ENCODE measurements at regions of chr12 and their contacts with region 1.

Region 1: DNA sequence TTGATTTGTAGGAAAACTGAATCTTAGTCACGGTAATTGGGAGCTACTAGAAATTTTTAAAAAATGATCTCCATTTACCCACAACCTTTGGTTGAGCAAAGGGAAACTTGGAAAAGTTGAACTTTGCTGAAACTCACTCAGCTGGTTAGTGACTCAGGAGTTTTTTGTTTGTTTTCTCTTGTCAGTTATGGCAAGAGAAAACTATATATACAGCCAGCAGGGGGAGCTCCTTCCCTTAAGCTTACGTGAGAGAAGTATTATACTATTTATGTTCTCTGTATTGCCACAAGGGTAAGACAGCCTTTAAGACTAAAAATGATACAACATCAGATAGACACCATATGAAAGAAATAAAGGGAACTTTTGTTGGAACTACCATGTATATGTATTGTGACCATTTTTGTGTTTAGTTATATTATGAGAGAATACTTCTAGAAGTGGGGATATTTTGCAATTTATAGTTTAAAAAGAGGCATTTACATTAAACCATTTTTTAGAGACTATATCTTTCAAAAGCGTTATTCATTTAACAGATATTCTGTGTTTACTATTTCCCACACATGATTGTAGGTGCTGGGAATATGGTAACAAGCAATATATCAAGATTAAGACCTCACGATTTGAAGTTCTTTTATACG is 28.1 kb upstream of the TBC1D30 start:
- DNase-seq: peak; percentile 67
- CTCF ChIP-seq: peak; percentile 78

Region 2: GRCh38 chr12:64583771-64584421 is 212.4 kb before region 1 on chr12:
- CTCF ChIA-PET with region 1: no interaction called
- POLR2A ChIA-PET with region 1: no interaction called
- DNase-seq: no peak
- CTCF ChIP-seq: no peak

Region 3: GRCh38 chr12:64780531-64781279 is 15.6 kb before region 1 on chr12:
- CTCF ChIA-PET with region 1: interaction called, 40 read pairs
- POLR2A ChIA-PET with region 1: no interaction called
- DNase-seq: peak; percentile 47
- CTCF ChIP-seq: no peak

Region 4: GRCh38 chr12:64785838-64786237 is 10.5 kb before region 1 on chr12:
- CTCF ChIA-PET with region 1: interaction called, 40 read pairs
- POLR2A ChIA-PET with region 1: no interaction called
- DNase-seq: no peak
- CTCF ChIP-seq: no peak

Region 5: GRCh38 chr12:64806593-64807460 is 10.5 kb after region 1 on chr12:
- CTCF ChIA-PET with region 1: interaction called, 33 read pairs
- POLR2A ChIA-PET with region 1: no interaction called
- DNase-seq: no peak
- CTCF ChIP-seq: no peak

Region 6: GRCh38 chr12:64814432-64814831 is 18.1 kb after region 1 on chr12:
- CTCF ChIA-PET with region 1: interaction called, 33 read pairs
- POLR2A ChIA-PET with region 1: no interaction called
- DNase-seq: no peak
- CTCF ChIP-seq: no peak

Region 7: GRCh38 chr12:65106948-65107347 is 310.6 kb after region 1 on chr12:
- CTCF ChIA-PET with region 1: interaction called, 57 read pairs
- POLR2A ChIA-PET with region 1: no interaction called
- DNase-seq: peak; percentile 13
- CTCF ChIP-seq: peak; percentile 21

Region 8: GRCh38 chr12:65121049-65121955 is 325.0 kb after region 1 on chr12 and contains the start of gene WIF1:
- CTCF ChIA-PET with region 1: interaction called, 39 read pairs
- POLR2A ChIA-PET with region 1: no interaction called
- DNase-seq: peak; percentile 38
- CTCF ChIP-seq: peak; percentile 45

Measured in GM10248 (cell line).